ENCODE measurements at regions of chr2 and their contacts with region 1.

Region 1: DNA sequence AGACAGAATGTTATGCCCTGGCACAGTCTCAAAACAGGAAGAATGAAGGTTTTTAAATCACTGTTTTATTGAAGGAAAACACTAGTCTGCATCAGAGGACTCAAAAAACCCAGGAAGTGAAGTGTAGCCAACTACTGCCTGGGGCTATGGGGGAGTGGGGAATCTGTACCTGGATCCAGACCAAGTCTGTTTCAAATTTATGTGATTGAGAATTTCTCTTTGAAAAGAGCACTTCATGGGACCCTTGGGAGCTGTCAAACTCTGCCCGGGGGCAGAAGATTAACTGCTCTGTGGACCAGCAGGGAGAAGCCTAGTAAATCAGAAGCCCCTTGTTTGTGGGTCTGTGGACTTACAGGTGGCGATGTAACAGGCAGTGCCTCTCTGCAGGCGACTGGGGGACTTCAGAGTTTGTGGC is 45.3 kb upstream of the TANC1 start:
- DNase-seq: no peak

Region 2: DNA sequence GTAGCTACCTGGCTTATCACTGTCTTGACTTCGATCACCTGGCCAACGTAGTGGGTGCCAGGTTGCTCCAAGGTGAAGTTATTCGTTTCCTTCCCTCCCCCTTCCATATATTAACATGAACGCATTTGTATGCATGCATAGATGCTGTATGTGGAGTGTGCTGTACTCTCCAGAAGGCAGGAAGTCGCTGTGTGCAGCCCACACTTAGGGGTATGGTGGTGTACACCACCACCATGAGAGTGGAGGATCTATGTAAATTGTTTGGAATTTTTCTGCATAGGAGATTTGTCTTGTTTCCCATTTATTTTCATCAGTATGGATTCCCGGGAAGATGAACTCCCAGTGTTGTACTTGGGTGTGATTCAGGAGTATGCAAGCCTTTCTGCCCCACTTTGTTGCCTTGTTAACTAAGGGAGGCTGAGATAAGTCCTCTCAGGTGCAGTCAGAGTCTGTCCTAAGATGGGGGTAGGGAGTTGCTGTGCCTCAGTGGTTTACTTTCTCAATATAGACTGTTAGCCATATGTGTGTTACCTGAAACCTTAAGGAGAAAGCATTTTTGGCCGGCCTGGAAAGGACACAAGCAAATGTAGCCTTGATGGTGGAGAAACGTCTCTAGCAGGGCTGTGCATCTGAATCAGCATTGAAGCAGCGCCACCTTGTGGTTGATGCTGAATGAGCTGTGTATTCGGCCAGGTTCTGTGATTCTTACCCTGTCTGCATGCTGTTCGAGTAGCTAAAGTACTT is 195.1 kb after region 1 on chr2:
- in situ Hi-C with region 1: loop called (anchors 25 kb)
- DNase-seq: peak; percentile 85

Measured in KBM-7 (cell line).